Heart right ventricle (tissue), 16 donors: ENCODE measurements at regions of chr16 and their contacts with region 1.

Region 1: DNA sequence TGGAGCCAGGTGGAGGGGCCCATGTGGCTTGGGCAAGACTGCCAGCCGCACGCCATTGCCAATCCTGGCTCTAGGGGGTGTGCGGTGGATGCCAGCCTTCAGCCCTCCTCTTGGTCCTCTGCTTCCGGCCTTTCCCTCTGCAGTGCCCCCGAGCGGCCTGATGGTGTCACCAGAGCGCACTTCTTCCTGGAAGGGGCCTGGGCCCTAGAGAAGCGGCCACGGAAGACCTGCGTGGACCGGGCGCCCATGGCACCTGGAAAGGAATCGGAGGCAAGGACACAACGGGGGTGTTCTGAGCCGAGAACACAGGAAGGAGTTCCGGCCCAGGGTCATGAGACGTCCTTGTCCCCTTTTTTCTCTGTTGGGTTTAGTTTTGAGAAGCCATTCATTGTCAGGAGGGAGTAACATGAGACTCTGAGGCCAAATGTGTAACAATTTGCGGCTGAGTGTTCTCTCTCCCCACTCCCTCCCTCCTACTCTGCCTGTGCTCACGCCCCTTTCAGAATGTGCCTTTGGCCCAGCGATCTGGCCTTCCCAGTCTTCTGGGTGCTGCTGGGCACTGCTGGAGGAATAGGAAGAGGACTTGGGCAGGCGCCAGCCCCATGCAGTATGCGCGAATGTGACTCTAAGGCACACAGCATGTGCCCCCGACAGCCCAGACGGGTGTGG is 92.8 kb downstream of the IRX3 start:
- DNase-seq: peak; percentile 82 to 85
- ATAC-seq: peak; percentile 82 to 94 (median 90)
- H3K4me3 ChIP-seq: peak overlapping the region in 8 of 10 donors; percentile 10 to 47 (median 34)
- H3K27ac ChIP-seq: peak overlapping the region; percentile 76 to 91 (median 86)
- H3K4me1 ChIP-seq: peaks cover 0 to 25% (median 13%) of the 10 kb centered on the region in 9 donors
- H3K27me3 ChIP-seq: peaks cover 0 to 2% (median 0%) of the 10 kb centered on the region in 7 donors
- CTCF ChIP-seq: peak; percentile 78 to 93 (median 87)

Region 2: GRCh38 chr16:53945996-53946395 is 247.8 kb before region 1 on chr16:
- intact Hi-C with region 1: loop called in 1 of 10 experiments (anchors 5 kb)
- DNase-seq: no peak
- ATAC-seq: peak in 6 of 8 donors; percentile 60 to 79 (median 68)
- H3K4me3 ChIP-seq: no peak overlapping the region
- H3K27ac ChIP-seq: no peak overlapping the region
- H3K4me1 ChIP-seq: peaks cover 0 to 16% (median 0%) of the 10 kb centered on the region in 9 donors
- H3K27me3 ChIP-seq: no peaks in the 10 kb centered on the region
- CTCF ChIP-seq: peak; percentile 49 to 80 (median 73)

Region 3: GRCh38 chr16:54098247-54098646 is 95.6 kb before region 1 on chr16:
- intact Hi-C with region 1: no loop called
- DNase-seq: no peak
- ATAC-seq: no peak
- H3K4me3 ChIP-seq: no peak overlapping the region
- H3K27ac ChIP-seq: no peak overlapping the region
- H3K4me1 ChIP-seq: no peaks in the 10 kb centered on the region
- H3K27me3 ChIP-seq: no peaks in the 10 kb centered on the region
- CTCF ChIP-seq: no peak

Region 4: GRCh38 chr16:54277845-54278703 is 84.3 kb after region 1 on chr16:
- intact Hi-C with region 1: loop called in 6 of 10 experiments (anchors 1 to 10 kb)
- DNase-seq: no peak
- ATAC-seq: no peak
- H3K4me3 ChIP-seq: no peak overlapping the region
- H3K27ac ChIP-seq: no peak overlapping the region
- H3K4me1 ChIP-seq: peaks cover 0 to 14% (median 5%) of the 10 kb centered on the region in 9 donors
- H3K27me3 ChIP-seq: peaks cover 0 to 39% (median 6%) of the 10 kb centered on the region in 7 donors
- CTCF ChIP-seq: no peak

Region 5: DNA sequence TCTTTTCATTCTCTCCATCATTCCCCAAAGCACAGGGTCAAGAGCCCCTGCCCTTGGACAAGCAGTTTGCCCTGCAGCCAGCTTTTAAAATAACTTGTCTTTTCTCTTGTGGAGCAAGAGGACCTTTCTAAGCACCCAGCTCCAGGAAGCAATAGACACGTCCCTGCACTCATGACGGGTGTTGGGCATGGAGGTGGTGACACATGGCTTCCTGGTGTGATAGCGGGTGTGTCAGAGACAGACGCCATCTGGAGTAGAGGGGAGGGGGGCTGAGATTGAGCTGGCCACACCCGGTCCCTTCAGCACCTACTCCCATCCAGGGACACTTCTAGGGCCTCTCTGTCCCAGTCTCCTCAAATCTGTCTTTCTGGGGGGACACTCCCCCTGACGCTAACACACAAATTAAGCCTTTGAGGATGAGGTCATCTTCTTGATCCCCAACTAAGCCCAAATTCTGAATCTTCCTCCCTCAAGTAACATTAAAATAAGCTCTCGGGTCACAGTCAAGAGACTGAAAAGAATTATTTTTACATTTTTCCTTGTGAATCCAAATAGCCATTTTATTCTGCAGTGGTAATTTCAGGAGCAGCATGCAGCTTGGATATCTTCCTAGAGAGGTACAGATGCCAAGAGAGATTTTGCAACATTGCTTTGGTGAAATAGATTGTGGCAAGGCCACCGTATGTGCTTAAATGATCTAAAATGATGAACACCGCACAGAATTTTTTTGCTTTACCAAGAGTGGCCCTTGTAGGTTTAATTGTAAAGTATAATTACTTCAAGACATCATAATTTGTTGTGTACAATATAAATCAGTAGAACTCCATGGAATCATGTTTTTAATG is 309.4 kb after region 1 on chr16:
- intact Hi-C with region 1: loop called in 1 of 10 experiments (anchors 10 kb)
- DNase-seq: peak; percentile 71 to 75
- ATAC-seq: peak; percentile 72 to 97 (median 88)
- H3K4me3 ChIP-seq: no peak overlapping the region
- H3K27ac ChIP-seq: peak overlapping the region; percentile 3 to 81 (median 63)
- H3K4me1 ChIP-seq: peaks cover 8 to 67% (median 47%) of the 10 kb centered on the region in 9 donors
- H3K27me3 ChIP-seq: no peaks in the 10 kb centered on the region
- CTCF ChIP-seq: no peak

Region 6: GRCh38 chr16:54518801-54519695 is 325.2 kb after region 1 on chr16:
- intact Hi-C with region 1: no loop called
- DNase-seq: no peak
- ATAC-seq: no peak
- H3K4me3 ChIP-seq: no peak overlapping the region
- H3K27ac ChIP-seq: no peak overlapping the region
- H3K4me1 ChIP-seq: peaks cover 0 to 26% (median 12%) of the 10 kb centered on the region in 9 donors
- H3K27me3 ChIP-seq: no peaks in the 10 kb centered on the region
- CTCF ChIP-seq: no peak

Region 7: GRCh38 chr16:54936979-54937670 is 743.3 kb after region 1 on chr16:
- intact Hi-C with region 1: loop called in 4 of 10 experiments (anchors 5 to 10 kb)
- DNase-seq: peak; percentile 38 to 52
- ATAC-seq: peak; percentile 30 to 73 (median 58)
- H3K4me3 ChIP-seq: peak overlapping the region; percentile 17 to 90 (median 68)
- H3K27ac ChIP-seq: peak overlapping the region; percentile 14 to 96 (median 64)
- H3K4me1 ChIP-seq: peaks cover 3 to 46% (median 36%) of the 10 kb centered on the region in 9 donors
- H3K27me3 ChIP-seq: peaks cover 0 to 100% (median 88%) of the 10 kb centered on the region in 7 donors
- CTCF ChIP-seq: peak; percentile 36 to 73 (median 70)